ENCODE measurements at regions of chr2 and their contacts with region 1.

Region 1: GRCh38 chr2:28392297-28393113 is at the start of gene FOSL2:
- DNase-seq: peak; percentile 96
- ATAC-seq: peak; percentile 74
- H3K4me3 Mint-ChIP-seq: no peak within 1 kb of the TSS
- H3K27ac Mint-ChIP-seq: peak within 1 kb of the TSS; percentile 99
- H3K4me1 Mint-ChIP-seq: peaks cover 30% of the 10 kb centered on the region
- H3K27me3 Mint-ChIP-seq: no peaks in the 10 kb centered on the region
- total RNA-seq, gene FOSL2: 135 to 225 TPM

Region 2: GRCh38 chr2:27356382-27357181 is 1035.9 kb before region 1 on chr2 and contains the start of gene GTF3C2:
- CTCF ChIA-PET with region 1: no interaction called
- POLR2A ChIA-PET with region 1: no interaction called
- intact Hi-C with region 1: loop called in 1 of 2 experiments (anchors 2 kb)
- DNase-seq: peak; percentile 96
- ATAC-seq: peak; percentile 82
- H3K4me3 Mint-ChIP-seq: peak within 1 kb of the TSS; percentile 98
- H3K27ac Mint-ChIP-seq: peak within 1 kb of the TSS; percentile 100
- H3K4me1 Mint-ChIP-seq: peaks cover 50% of the 10 kb centered on the region
- H3K27me3 Mint-ChIP-seq: no peaks in the 10 kb centered on the region
- total RNA-seq, gene GTF3C2: 60.3 to 70.2 TPM

Region 3: GRCh38 chr2:27723372-27724144 is 668.9 kb before region 1 on chr2:
- CTCF ChIA-PET with region 1: no interaction called
- POLR2A ChIA-PET with region 1: no interaction called
- intact Hi-C with region 1: loop called in 1 of 2 experiments (anchors 5 kb)
- DNase-seq: peak; percentile 57
- ATAC-seq: no peak
- H3K4me3 Mint-ChIP-seq: no peak overlapping the region
- H3K27ac Mint-ChIP-seq: no peak overlapping the region
- H3K4me1 Mint-ChIP-seq: peaks cover 30% of the 10 kb centered on the region
- H3K27me3 Mint-ChIP-seq: no peaks in the 10 kb centered on the region

Region 4: GRCh38 chr2:27954771-27955383 is 437.6 kb before region 1 on chr2:
- CTCF ChIA-PET with region 1: no interaction called
- POLR2A ChIA-PET with region 1: no interaction called
- intact Hi-C with region 1: loop called (anchors 2 to 5 kb)
- DNase-seq: peak; percentile 71
- ATAC-seq: peak; percentile 72
- H3K4me3 Mint-ChIP-seq: peak overlapping the region; percentile 55
- H3K27ac Mint-ChIP-seq: peak overlapping the region; percentile 91
- H3K4me1 Mint-ChIP-seq: peaks cover 73% of the 10 kb centered on the region
- H3K27me3 Mint-ChIP-seq: no peaks in the 10 kb centered on the region

Region 5: DNA sequence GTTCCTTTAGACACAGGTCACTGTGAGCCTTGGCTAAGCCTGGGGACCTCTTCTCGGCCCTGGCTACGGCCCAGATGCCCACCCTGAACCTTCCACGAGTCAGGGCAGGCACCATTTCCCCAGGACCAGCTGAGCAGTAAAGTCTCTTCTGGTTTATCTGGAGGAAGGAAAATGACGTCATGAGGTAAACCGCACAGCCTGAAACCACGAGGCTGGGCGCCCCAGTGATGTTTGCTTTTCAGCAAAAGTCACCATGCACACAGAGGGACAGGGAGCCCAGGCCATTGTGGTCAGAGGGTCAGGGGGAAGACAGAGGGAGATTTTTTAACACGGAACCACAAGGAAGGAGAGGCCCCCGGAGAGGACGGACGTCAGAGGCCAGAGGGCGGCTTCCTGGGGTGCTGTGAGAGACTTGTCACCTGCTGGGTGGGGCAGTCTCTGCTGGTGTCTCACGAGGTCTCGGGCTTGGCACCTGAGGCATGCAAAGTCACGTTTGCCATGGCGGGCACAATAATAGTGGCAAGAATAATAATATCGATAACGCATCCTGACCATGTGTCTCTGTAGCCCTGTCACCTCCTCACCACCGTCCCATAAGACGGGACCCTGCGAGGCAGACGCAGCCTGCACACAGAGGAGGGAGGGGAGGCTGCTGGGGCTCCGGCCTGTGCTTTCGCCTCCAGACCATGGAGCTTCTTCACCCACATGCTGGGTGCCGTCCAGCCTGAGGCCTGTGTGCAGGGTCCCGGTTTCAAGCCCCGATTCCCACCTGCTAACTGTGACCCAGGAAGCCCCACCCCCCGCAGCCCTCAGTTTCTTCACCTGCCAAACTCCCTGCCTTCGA is 33.1 kb before region 1 on chr2:
- CTCF ChIA-PET with region 1: interaction called, 5 read pairs
- POLR2A ChIA-PET with region 1: interaction called, 4 read pairs
- intact Hi-C with region 1: loop called (anchors 1 to 2 kb)
- DNase-seq: peak; percentile 89
- ATAC-seq: peak; percentile 81
- H3K4me3 Mint-ChIP-seq: peak overlapping the region; percentile 53
- H3K27ac Mint-ChIP-seq: peak overlapping the region; percentile 94
- H3K4me1 Mint-ChIP-seq: peaks cover 67% of the 10 kb centered on the region
- H3K27me3 Mint-ChIP-seq: peaks cover 4% of the 10 kb centered on the region

Region 6: GRCh38 chr2:28423856-28424605 is 31.5 kb after region 1 on chr2:
- CTCF ChIA-PET with region 1: no interaction called
- POLR2A ChIA-PET with region 1: no interaction called
- intact Hi-C with region 1: no loop called
- DNase-seq: peak; percentile 57
- ATAC-seq: peak; percentile 73
- H3K4me3 Mint-ChIP-seq: peak overlapping the region; percentile 38
- H3K27ac Mint-ChIP-seq: peak overlapping the region; percentile 90
- H3K4me1 Mint-ChIP-seq: peaks cover 44% of the 10 kb centered on the region
- H3K27me3 Mint-ChIP-seq: no peaks in the 10 kb centered on the region

Region 7: DNA sequence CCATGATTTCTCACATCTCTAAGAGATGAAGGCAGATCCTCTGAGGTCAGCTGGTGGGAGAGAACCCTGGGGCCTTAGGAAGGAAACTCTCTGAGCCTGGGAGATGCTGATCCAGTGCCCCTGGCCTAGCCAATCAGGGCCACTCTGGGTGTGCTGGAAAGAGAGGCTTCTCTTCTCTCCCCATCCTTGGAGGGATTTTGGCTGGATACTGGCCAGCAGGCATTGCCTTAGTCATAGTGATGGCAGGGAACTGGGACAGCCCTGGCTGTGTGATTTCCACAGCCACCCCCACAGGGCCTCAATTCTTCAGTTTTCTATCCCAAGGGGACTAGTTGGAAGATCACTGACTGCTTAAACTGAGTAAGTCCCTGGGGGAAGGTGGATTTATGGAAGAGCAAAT is 76.8 kb after region 1 on chr2:
- CTCF ChIA-PET with region 1: no interaction called
- POLR2A ChIA-PET with region 1: no interaction called
- intact Hi-C with region 1: loop called in 1 of 2 experiments (anchors 1 kb)
- DNase-seq: no peak
- ATAC-seq: no peak
- H3K4me3 Mint-ChIP-seq: no peak overlapping the region
- H3K27ac Mint-ChIP-seq: no peak overlapping the region
- H3K4me1 Mint-ChIP-seq: peaks cover 50% of the 10 kb centered on the region
- H3K27me3 Mint-ChIP-seq: peaks cover 3% of the 10 kb centered on the region

Region 8: GRCh38 chr2:30146438-30147147 is 1754.1 kb after region 1 on chr2 and contains the start of gene YPEL5:
- CTCF ChIA-PET with region 1: no interaction called
- POLR2A ChIA-PET with region 1: no interaction called
- intact Hi-C with region 1: loop called in 1 of 2 experiments (anchors 5 kb)
- DNase-seq: peak; percentile 99
- ATAC-seq: peak; percentile 94
- H3K4me3 Mint-ChIP-seq: peak within 1 kb of the TSS; percentile 81
- H3K27ac Mint-ChIP-seq: peak within 1 kb of the TSS; percentile 96
- H3K4me1 Mint-ChIP-seq: peaks cover 55% of the 10 kb centered on the region
- H3K27me3 Mint-ChIP-seq: no peaks in the 10 kb centered on the region
- total RNA-seq, gene YPEL5: 27.2 to 35.8 TPM